Prostate gland (tissue), 2 donors: ENCODE measurements at regions of chr4 and their contacts with region 1.

Region 1: GRCh38 chr4:98928505-98929340 is at the start of gene EIF4E:
- DNase-seq: peak; percentile 97
- H3K4me3 ChIP-seq: peak within 1 kb of the TSS; percentile 96 to 97
- H3K27ac ChIP-seq: peak within 1 kb of the TSS; percentile 92 to 96
- H3K4me1 ChIP-seq: no peaks in the 10 kb centered on the region
- H3K27me3 ChIP-seq: no peaks in the 10 kb centered on the region
- CTCF ChIP-seq: peak in 1 of 4 experiments; percentile 20
- POLR2A ChIP-seq: peak; percentile 35
- total RNA-seq, gene EIF4E: 46.8 to 70.9 TPM

Region 2: DNA sequence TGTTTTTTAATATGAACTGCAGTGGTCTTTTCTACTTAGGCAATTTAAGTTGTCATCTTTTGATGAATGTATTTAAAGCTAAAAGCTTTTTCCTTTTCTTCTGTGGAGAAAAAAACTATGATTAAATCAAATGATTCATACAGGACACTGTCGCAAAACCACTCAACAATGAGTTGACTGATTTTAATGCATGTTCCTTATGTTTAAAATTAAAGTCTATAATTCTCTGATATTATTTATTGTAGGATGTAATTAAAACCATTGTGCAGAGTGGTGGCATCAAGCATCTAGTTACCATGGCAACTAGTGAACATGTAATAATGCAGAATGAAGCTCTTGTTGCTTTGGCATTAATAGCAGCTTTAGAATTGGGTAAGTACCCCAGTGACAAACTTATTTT is 495.0 kb before region 1 on chr4:
- intact Hi-C with region 1: no loop called
- DNase-seq: no peak
- H3K4me3 ChIP-seq: no peak overlapping the region
- H3K27ac ChIP-seq: no peak overlapping the region
- H3K4me1 ChIP-seq: no peaks in the 10 kb centered on the region
- H3K27me3 ChIP-seq: no peaks in the 10 kb centered on the region
- CTCF ChIP-seq: no peak
- POLR2A ChIP-seq: no peak

Region 3: GRCh38 chr4:98474408-98474844 is 454.3 kb before region 1 on chr4:
- intact Hi-C with region 1: loop called (anchors 5 kb)
- DNase-seq: no peak
- H3K4me3 ChIP-seq: no peak overlapping the region
- H3K27ac ChIP-seq: no peak overlapping the region
- H3K4me1 ChIP-seq: no peaks in the 10 kb centered on the region
- H3K27me3 ChIP-seq: no peaks in the 10 kb centered on the region
- CTCF ChIP-seq: no peak
- POLR2A ChIP-seq: no peak

Region 4: DNA sequence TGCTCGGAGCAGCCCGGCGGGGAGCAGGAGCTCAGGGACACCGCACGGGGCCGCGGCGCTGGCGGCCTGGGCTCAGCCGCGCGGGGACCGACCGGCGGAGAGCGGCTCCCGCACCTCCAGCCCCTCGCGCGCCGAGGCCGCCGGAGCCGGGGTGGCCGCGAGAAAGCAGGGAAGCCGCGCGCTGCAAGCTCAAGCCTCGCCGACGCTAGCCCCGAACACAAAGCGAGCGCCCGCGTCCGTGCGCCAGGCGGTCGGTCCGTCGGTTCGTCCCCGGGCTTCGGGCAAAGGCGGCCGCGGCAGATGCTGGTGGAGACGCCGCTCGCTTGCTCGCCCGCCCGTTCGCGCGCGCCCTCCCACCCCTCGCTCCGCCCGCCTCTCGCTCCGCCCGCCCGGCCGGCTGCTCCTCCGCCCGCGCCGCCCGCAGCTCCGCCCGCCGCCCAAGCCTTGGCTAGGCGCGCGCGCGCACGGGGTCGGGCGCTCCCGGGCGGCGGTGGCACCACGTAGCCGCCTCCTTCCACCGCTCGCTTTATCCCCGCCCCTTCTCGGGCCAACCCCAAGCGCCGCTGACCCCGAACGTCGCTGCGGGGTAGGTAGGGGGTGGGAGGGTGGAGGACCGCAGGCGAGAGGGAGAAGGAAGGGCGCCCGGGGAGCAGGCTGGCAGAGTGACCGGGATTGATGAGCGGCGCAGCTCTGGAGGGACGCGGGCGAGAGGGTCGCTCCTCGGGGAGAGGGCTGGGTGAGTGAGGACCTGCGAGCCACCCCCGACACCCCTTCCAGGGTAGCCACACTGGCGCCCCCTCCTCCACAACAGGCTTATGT is 270.2 kb before region 1 on chr4 and contains the start of gene TSPAN5:
- intact Hi-C with region 1: loop called (anchors 10 kb)
- DNase-seq: peak; percentile 70
- H3K4me3 ChIP-seq: peak within 1 kb of the TSS; percentile 50 to 63
- H3K27ac ChIP-seq: peak within 1 kb of the TSS; percentile 62 to 73
- H3K4me1 ChIP-seq: no peaks in the 10 kb centered on the region
- H3K27me3 ChIP-seq: no peaks in the 10 kb centered on the region
- CTCF ChIP-seq: no peak
- POLR2A ChIP-seq: no peak
- total RNA-seq, gene TSPAN5: 7.9 to 48.5 TPM

Region 5: DNA sequence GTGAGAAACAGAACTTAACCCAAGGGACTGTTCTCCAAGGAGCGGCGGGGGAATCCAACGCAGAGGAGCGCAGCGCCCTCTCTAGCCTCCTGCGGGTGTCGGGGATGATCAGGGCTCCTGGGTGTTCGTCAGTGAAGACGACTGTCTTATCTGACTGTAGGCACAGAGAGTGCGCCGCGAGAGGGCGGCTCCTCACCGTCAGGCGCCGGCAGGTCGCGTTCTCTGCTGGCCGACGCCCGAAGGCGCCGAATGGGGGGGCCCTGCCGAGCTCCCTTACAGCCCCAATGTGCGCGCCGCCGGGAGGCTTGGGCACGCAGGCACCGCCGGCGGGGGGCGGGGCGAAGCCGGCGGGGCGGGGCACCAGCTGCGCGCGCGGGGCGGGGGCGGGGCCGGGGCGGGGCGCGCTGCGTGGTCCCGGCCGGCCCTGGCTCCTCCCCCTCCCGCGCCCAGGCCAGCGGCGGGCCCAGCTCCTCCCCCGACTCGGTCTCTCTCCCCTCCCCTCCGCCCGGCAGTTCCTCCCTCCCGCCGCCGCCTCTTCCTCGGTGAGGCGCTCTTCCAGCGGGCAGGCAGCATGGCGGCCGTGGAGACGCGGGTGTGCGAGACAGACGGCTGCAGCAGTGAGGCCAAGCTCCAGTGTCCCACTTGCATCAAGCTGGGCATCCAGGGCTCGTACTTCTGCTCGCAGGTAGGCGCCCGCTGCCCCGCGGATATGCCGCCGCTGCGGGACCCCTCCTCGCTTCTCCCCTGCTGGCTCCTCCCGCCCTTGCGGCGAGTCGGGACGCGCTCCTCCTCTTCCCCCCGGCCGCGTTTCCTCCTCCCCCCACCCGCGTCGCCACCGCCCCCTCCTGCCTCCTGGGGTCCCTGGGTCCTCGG is 66.7 kb after region 1 on chr4 and contains the start of gene METAP1:
- intact Hi-C with region 1: loop called (anchors 5 kb)
- DNase-seq: peak; percentile 98
- H3K4me3 ChIP-seq: peak within 1 kb of the TSS; percentile 90 to 94
- H3K27ac ChIP-seq: peak within 1 kb of the TSS; percentile 91 to 93
- H3K4me1 ChIP-seq: no peaks in the 10 kb centered on the region
- H3K27me3 ChIP-seq: no peaks in the 10 kb centered on the region
- CTCF ChIP-seq: peak; percentile 36 to 96 (median 90)
- POLR2A ChIP-seq: peak; percentile 82
- total RNA-seq, gene METAP1: 55.3 to 70.1 TPM